Left colon (tissue), 2 donors: ENCODE measurements at regions of chr15 and their contacts with region 1.

Region 1: DNA sequence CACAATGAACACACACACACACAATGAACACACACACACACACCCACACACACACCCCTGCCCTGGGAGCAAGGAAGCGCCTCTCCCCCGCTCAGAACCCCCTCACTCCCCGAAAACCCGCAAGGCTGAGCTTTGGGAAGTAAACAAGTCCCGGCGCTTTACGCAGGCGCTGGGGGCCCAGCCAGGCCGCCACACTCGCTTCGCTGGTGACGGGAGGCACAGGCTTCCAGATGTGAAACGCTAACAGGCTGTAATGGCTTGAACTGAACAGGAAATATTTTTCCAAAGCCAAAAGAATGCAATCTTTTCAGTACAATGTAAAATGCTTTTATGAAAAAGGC is 122.7 kb upstream of the IGF1R start:
- DNase-seq: no peak
- ATAC-seq: no peak

Region 2: DNA sequence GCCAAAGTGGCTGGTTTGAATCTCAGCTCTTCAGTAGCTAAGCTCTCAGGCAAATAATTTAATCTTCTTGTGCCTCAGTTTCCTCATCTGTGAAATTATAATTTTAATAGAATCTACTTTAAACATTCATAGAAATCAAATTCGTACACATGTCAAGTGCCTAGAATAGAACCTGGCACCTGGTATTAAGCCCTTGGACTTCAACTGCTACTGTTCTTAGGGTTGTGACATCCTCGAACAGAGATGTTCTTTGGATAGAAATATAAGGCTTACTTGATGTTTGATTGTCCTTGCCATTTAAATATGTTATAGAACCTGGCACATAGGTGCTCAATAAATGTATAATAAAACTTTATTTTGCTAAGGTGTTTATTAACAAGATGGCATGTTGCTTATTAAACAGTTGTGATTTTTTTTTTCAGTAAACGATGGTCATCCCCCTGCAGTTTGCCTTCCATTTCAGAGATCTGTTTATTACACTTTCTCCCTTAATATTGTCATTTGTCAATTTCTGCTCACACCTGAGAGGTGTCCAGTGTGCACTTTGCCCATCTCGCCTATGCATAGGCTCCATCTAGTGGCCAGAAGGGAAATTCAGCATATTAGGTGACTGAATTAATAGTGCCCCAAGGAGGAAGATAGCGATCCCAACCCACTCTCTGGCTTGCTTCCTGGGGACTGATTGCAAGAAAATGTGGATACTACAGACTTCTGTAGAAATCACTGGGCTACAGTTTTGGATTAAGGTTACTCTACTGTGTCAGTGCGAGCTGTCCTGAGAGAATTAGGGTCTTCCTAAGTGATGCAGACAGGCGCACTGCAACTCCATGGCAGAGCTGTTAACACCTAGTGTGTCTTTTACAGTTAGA is 133.4 kb after region 1 on chr15:
- intact Hi-C with region 1: loop called in 1 of 2 experiments (anchors 5 kb)
- DNase-seq: peak in 1 of 2 donors; percentile 15
- ATAC-seq: peak; percentile 84

Region 3: DNA sequence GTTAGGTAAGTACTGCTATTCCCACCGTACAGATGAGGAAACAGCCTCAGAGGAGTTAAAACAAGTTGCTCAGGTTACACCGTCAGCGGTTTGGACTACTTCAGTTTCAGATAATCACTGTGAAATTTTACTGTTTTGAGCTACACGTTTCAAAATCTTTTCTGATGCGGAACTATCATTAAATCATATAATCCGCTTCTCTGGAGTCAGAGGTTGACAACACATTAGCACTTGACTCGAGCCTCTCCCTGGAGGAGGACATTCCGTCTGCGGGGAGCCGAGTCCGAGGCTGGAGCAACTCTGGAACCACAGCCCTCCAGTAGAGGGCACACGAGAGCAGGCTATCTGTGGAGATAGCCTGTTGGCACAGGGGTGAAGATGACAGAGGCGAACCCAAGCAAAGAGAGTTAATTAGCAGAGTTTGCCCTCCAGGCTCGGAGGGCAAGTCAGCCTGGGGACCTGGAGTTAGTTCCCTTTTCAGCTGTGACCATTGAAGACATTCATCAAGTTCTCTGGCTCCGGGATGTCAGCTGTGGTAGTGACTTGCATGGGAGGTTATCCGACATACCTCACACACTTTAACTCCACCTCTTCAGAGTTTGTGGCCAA is 253.9 kb after region 1 on chr15:
- intact Hi-C with region 1: loop called in 1 of 2 experiments (anchors 10 kb)
- DNase-seq: peak; percentile 77 to 90
- ATAC-seq: peak; percentile 96

Region 4: GRCh38 chr15:99068186-99068585 is 542.6 kb after region 1 on chr15:
- intact Hi-C with region 1: loop called in 1 of 2 experiments (anchors 10 kb)
- DNase-seq: no peak
- ATAC-seq: no peak